ENCODE measurements at regions of chr10 and their contacts with region 1.

Region 1: GRCh38 chr10:74047868-74048267 is 50.0 kb downstream of the VCL start:
- DNase-seq: no peak
- H3K4me3 ChIP-seq: no peak overlapping the region
- H3K4me3 Mint-ChIP-seq: no peak overlapping the region
- H3K27ac ChIP-seq: no peak overlapping the region
- H3K27ac Mint-ChIP-seq: peak overlapping the region in 1 of 8 donors; percentile 50
- H3K4me1 ChIP-seq: no peaks in the 10 kb centered on the region
- H3K4me1 Mint-ChIP-seq: peaks cover 12 to 20% (median 18%) of the 10 kb centered on the region in 3 donors
- H3K27me3 ChIP-seq: no peaks in the 10 kb centered on the region
- H3K27me3 Mint-ChIP-seq: no peaks in the 10 kb centered on the region

Region 2: GRCh38 chr10:73838827-73839226 is 209.0 kb before region 1 on chr10:
- CTCF ChIA-PET with region 1: no interaction called
- POLR2A ChIA-PET with region 1: no interaction called
- DNase-seq: no peak
- H3K4me3 ChIP-seq: no peak overlapping the region
- H3K4me3 Mint-ChIP-seq: no peak overlapping the region
- H3K27ac ChIP-seq: no peak overlapping the region
- H3K27ac Mint-ChIP-seq: no peak overlapping the region
- H3K4me1 ChIP-seq: no peaks in the 10 kb centered on the region
- H3K4me1 Mint-ChIP-seq: no peaks in the 10 kb centered on the region
- H3K27me3 ChIP-seq: no peaks in the 10 kb centered on the region
- H3K27me3 Mint-ChIP-seq: no peaks in the 10 kb centered on the region

Region 3: DNA sequence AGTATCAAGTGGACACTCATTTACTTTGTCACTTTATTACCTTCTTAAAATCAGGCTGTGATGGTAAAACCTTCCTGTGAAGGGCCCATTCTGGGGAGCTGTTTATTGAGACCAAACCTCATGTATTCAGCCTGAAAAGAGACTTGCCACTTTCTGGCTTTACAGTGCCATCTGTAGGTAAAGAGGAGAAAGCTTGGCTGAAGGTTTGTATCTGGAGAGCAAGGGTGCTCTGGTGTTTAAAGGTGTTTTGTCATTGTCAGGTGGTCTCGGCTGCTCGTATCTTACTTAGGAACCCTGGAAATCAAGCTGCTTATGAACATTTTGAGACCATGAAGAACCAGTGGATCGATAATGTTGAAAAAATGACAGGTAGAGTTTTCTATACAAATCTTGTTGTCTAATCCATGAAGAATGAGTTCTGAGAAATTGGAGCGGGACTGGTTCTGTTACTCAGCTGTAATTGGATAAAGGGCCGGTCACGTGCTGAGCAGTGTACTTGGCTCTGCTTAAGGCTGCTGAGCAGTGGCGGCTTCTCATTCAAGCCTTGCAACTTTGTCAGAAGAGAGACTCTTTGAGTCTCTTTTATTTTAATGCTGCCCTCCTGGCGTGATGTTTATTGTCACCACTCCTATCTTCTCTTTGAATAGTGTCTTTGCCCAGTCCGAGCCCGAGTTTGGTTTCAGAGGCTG is 55.8 kb after region 1 on chr10:
- CTCF ChIA-PET with region 1: no interaction called
- POLR2A ChIA-PET with region 1: interaction called, 12 read pairs
- DNase-seq: no peak
- H3K4me3 ChIP-seq: no peak overlapping the region
- H3K4me3 Mint-ChIP-seq: no peak overlapping the region
- H3K27ac ChIP-seq: no peak overlapping the region
- H3K27ac Mint-ChIP-seq: peak overlapping the region in 3 of 8 donors; percentile 20 to 78 (median 54)
- H3K4me1 ChIP-seq: no peaks in the 10 kb centered on the region
- H3K4me1 Mint-ChIP-seq: peaks cover 0 to 5% (median 0%) of the 10 kb centered on the region in 3 donors
- H3K27me3 ChIP-seq: no peaks in the 10 kb centered on the region
- H3K27me3 Mint-ChIP-seq: no peaks in the 10 kb centered on the region